Calu3 (cell line): ENCODE measurements at regions of chr17 and their contacts with region 1.

Region 1: DNA sequence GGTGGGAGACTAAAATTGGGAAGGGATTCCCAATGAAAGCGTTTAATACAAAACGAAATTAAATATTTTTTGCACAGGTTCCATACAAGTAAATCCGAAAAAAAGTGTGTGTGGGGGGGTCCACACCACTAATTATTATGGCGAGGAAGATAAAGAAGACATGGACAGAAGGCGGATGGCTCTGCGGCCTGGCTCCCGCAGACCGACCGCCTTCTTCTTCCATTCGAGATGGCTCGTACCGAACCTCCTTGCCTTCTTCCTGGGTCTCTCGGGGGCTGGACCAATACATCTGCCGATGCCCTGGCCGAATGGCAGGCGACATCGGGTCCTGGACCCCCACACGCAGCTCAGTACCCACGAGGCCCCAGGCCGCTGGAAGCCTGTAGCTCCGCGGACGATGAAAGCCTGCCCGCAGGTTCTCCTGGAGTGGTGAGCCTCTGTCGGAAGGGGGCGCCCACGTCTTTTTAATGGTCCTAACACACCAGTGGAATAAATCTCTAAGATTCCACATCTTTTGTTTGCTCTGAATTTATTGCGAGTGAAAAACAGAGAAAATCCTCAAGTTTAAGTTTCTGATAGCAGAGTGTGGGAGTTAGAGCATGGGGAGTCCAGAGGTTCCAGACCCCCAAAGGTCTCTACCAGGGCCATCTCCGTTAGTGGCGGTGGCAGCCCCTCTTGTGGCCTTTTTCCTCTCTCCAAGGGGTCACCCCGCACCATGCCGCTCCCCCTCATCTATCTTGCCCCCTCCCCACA is 1.4 kb downstream of the PRAC2 start:
- DNase-seq: peak; percentile 96
- H3K4me3 Mint-ChIP-seq: peak overlapping the region; percentile 34
- H3K27ac Mint-ChIP-seq: no peak overlapping the region
- H3K4me1 Mint-ChIP-seq: peaks cover 21% of the 10 kb centered on the region
- H3K27me3 Mint-ChIP-seq: peaks cover 45% of the 10 kb centered on the region
- CTCF ChIP-seq: peak; percentile 94

Region 2: GRCh38 chr17:48655913-48656312 is 68.5 kb before region 1 on chr17:
- CTCF ChIA-PET with region 1: no interaction called
- intact Hi-C with region 1: no loop called
- DNase-seq: no peak
- H3K4me3 Mint-ChIP-seq: no peak overlapping the region
- H3K27ac Mint-ChIP-seq: no peak overlapping the region
- H3K4me1 Mint-ChIP-seq: no peaks in the 10 kb centered on the region
- H3K27me3 Mint-ChIP-seq: no peaks in the 10 kb centered on the region
- CTCF ChIP-seq: no peak

Region 3: GRCh38 chr17:48678141-48678971 is 46.1 kb before region 1 on chr17:
- CTCF ChIA-PET with region 1: interaction called, 36 read pairs
- intact Hi-C with region 1: loop called (anchors 2 kb)
- DNase-seq: peak; percentile 92
- H3K4me3 Mint-ChIP-seq: peak overlapping the region; percentile 10
- H3K27ac Mint-ChIP-seq: no peak overlapping the region
- H3K4me1 Mint-ChIP-seq: no peaks in the 10 kb centered on the region
- H3K27me3 Mint-ChIP-seq: no peaks in the 10 kb centered on the region
- CTCF ChIP-seq: peak; percentile 99

Region 4: DNA sequence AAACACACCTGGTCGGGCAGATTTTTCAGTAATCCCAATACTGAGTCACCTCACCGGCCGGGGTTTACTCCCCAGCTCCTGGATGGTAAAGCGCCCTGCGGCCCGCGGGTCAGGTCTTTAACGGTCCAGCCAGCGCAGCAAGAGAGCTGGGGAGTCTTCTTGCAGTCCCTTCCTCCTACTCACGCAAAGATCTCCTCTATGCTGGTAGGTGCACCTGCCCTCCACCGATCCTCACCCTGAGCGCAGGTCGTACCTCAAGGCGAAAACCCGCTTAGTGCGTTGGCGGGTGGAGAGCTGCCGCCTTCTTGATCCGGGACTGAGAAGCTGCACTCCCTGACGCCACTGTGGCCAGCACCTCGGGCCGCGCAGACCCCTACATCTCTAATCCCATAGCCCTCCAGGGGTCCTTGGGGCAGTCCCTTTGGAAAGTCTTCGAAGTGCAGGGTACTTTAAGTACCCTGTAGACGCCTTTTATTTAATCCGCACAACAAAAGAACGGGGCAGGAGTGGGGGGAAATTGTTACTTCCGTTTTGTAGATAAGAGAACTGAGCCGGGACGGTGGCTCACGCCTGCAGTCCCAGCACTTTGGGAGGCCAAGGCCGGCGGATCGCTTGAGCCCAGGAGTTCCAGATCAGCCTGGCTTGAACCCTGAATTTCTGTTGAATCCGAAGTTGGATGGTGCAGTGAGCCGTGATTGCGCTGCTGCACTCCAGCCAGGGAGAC is 14.5 kb after region 1 on chr17:
- CTCF ChIA-PET with region 1: interaction called, 16 read pairs
- intact Hi-C with region 1: no loop called
- DNase-seq: peak; percentile 50
- H3K4me3 Mint-ChIP-seq: peak overlapping the region; percentile 61
- H3K27ac Mint-ChIP-seq: no peak overlapping the region
- H3K4me1 Mint-ChIP-seq: peaks cover under 1% of the 10 kb centered on the region
- H3K27me3 Mint-ChIP-seq: peaks cover 93% of the 10 kb centered on the region
- CTCF ChIP-seq: no peak

Region 5: DNA sequence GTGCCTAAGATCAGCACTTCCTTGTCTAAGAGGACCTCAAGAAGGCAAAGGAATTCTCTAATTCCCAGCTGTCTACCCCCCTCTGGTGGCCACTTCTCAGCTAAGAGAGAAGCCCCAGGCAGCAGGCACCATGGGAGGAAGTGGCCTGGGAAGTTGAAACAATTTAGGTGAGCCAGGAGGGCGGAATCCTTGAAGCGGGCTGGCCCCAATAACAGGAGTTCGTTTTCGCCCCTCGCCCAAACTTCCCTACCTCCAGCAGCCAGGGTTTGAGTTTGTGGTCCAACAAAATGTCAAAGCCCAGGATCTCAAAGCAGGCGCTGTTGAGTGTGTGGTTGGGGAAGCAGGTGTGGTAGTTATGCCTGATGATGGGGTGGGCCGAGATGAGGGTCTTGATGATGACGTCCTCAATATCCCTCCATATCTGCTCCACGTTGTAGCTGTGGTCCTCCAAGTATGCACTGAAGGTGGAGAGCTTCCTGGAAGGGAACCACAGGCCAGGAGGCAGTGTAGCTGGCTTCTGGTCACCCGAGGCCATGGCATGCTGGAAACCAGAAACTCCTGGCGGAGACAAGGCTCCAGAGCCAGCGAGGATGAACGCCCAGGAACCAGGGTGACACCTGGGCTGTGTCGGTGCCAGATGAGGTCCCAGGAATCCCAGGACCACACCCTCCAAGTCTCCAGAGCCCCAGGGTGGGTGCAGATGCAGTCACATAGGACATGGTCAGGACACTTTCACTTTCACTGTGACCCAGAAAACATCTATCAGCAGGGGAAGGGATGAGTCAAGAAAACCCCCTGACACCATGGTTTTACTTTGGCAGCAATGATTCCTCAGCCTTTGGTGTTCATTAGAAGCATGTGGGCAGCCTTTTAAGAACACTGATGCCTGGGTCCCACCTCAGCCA is 67.0 kb after region 1 on chr17:
- CTCF ChIA-PET with region 1: interaction called, 60 read pairs
- intact Hi-C with region 1: loop called (anchors 1 kb)
- DNase-seq: peak; percentile 95
- H3K4me3 Mint-ChIP-seq: no peak overlapping the region
- H3K27ac Mint-ChIP-seq: peak overlapping the region; percentile 57
- H3K4me1 Mint-ChIP-seq: peaks cover 41% of the 10 kb centered on the region
- H3K27me3 Mint-ChIP-seq: peaks cover 25% of the 10 kb centered on the region
- CTCF ChIP-seq: peak; percentile 82

Region 6: GRCh38 chr17:48804925-48805411 is 80.5 kb after region 1 on chr17:
- CTCF ChIA-PET with region 1: interaction called, 11 read pairs
- intact Hi-C with region 1: no loop called
- DNase-seq: peak; percentile 90
- H3K4me3 Mint-ChIP-seq: no peak overlapping the region
- H3K27ac Mint-ChIP-seq: no peak overlapping the region
- H3K4me1 Mint-ChIP-seq: peaks cover 38% of the 10 kb centered on the region
- H3K27me3 Mint-ChIP-seq: no peaks in the 10 kb centered on the region
- CTCF ChIP-seq: peak; percentile 99

Region 7: GRCh38 chr17:48873209-48873608 is 148.8 kb after region 1 on chr17:
- CTCF ChIA-PET with region 1: interaction called, 82 read pairs
- intact Hi-C with region 1: loop called (anchors 1 kb)
- DNase-seq: no peak
- H3K4me3 Mint-ChIP-seq: no peak overlapping the region
- H3K27ac Mint-ChIP-seq: no peak overlapping the region
- H3K4me1 Mint-ChIP-seq: peaks cover 54% of the 10 kb centered on the region
- H3K27me3 Mint-ChIP-seq: no peaks in the 10 kb centered on the region
- CTCF ChIP-seq: no peak